A549 (cell line): ENCODE measurements at regions of chr3 and their contacts with region 1.

Region 1: GRCh38 chr3:187164885-187165543 is 25.7 kb upstream of the RPL39L start:
- DNase-seq: peak; percentile 21 to 53
- ATAC-seq: peak; percentile 50 to 62; a peak in 3 of 6 replicates
- H3K4me3 ChIP-seq: no peak overlapping the region
- H3K27ac ChIP-seq: no peak overlapping the region
- H3K4me1 ChIP-seq: no peaks in the 10 kb centered on the region
- CTCF ChIP-seq: peak; percentile 72
- EP300 ChIP-seq: no peak
- POLR2A ChIP-seq: no peak
- RAD21 ChIP-seq: peak; percentile 64 to 66

Region 2: DNA sequence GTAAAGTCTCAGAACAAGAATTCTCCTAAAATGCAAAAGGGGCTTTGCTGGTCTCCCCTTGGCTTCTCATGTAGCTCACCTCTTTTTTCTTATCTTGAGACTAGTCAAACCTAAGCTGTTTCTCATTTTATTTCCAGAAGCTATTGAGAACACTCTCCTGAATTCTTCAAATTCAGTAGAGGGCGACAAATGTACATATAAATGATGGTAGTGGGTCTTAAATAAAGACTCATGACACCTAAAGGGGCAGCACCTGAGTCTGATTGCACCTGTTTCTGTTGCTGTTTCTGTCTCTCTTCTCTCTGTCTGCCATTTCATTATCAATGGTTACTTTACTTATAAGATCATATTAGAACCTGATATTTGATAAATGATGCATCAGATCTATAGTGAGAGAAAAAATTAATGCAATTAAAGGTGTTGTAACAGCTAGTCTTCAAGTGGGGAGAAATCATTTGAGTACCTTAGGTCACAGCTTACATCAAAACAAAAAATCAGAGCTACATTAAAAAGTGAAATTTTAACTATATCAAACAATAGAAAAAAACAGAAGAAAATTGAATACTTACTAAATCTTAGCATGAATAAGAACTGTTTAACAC is 315.5 kb before region 1 on chr3:
- CTCF ChIA-PET with region 1: interaction called, 85 read pairs
- POLR2A ChIA-PET with region 1: interaction called, 6 read pairs
- DNase-seq: peak; percentile 28 to 42
- ATAC-seq: peak in 1 of 2 experiments; percentile 79; a peak in 3 of 6 replicates
- H3K4me3 ChIP-seq: no peak overlapping the region
- H3K27ac ChIP-seq: no peak overlapping the region
- H3K4me1 ChIP-seq: no peaks in the 10 kb centered on the region
- CTCF ChIP-seq: peak; percentile 61
- EP300 ChIP-seq: no peak
- POLR2A ChIP-seq: no peak
- RAD21 ChIP-seq: peak; percentile 70 to 77

Region 3: DNA sequence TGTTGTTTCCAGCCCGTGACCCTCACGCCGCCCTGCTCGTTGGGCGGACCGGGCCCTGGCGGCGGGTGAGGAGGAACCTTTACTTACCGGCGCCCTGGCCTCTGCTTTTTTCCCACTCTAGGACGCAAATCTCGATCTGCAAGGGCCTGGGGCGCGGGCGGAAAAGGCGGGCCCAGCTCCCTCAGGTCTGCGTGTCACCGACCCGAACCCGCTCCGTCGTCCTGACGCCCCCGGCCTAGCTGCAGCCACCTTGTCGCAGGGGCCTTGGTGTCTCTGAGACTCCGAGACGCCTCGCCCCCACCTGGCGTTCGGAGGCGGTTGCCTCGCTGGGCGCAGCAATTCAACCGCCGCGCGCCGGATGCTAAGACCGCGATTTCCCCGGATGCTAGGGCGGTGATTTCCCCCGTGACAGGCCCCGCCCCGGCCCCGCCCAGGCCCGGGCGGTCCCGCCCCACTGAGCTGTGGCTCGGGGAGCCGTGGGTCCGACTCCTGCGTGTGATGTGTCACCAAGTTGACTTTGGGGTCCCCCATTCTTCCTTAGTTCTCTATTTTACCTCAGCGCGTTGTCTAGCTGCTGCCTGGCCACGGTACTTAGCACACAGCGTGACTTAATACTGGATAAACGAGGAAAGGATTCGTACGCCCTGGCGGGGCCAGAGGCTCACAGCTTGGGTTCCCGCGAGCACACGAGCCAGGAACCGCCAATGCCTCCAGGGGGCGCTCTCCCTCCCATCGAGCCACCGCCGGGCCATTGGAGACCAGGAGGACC is 25.7 kb before region 1 on chr3 and contains the start of gene RPL39L:
- CTCF ChIA-PET with region 1: interaction called, 18 read pairs
- POLR2A ChIA-PET with region 1: interaction called, 3 read pairs
- DNase-seq: peak; percentile 86 to 87
- ATAC-seq: peak; percentile 99
- H3K4me3 ChIP-seq: peak within 1 kb of the TSS; percentile 68
- H3K27ac ChIP-seq: peak within 1 kb of the TSS; percentile 76 to 93
- H3K4me1 ChIP-seq: no peaks in the 10 kb centered on the region
- CTCF ChIP-seq: peak; percentile 82
- EP300 ChIP-seq: no peak
- POLR2A ChIP-seq: peak; percentile 76
- RAD21 ChIP-seq: peak in 1 of 2 experiments; percentile 44; a peak in 4 of 5 replicates
- polyA plus RNA-seq, gene RPL39L: 54.2 and 55.8 TPM in 2 replicates